Activated naive CD4-positive, alpha-beta T cell treated with anti-CD3 and anti-CD28 coated beads for 36 hours (primary cell): ENCODE measurements at regions of chr7 and their contacts with region 1.

Region 1: DNA sequence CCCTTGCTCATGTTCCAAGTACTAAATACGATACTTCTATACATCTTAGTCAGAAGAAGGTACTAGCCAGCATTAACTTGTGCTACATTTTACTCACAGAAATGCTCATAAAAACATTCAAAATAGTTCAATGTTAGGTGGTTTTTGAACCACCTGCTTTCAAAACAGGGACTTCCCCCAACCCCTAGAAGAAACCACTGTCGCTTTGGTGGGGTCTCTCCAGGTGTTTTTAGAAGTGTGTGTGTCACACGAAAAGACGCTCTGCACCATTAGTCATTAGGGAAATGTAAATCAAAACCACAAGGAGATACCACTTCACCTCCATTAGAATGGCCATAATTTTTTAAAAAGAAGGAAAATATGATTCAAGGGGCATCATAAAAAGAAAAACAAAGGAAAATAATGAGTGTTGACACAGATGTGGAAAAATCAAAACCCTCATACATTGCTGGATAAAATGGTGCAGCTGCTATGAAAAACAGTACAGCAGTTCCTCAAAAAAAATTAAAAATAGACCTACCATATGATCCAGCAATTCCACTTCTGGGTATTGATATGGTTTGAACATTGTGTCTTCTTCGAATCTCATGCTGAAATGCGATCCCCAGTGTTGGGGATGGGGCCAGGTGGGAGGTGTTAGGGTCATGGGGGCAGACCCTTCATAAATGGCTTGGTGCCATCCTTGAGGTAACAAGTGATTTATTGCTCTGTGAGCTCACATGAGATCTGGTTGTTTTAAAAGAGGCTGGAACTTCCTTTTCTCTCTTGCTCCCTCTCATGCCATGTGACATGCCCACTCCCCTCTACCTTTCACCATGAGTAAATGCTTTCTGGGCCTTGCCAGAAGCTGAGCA is 74.2 kb downstream of the MALSU1 start:
- DNase-seq: peak; percentile 88
- H3K4me3 Mint-ChIP-seq: no peak overlapping the region
- H3K27ac Mint-ChIP-seq: peak overlapping the region; percentile 83
- H3K4me1 Mint-ChIP-seq: peaks cover 48% of the 10 kb centered on the region
- H3K27me3 Mint-ChIP-seq: peaks cover 6% of the 10 kb centered on the region

Region 2: GRCh38 chr7:22445140-22445743 is 928.1 kb before region 1 on chr7:
- CTCF ChIA-PET with region 1: no interaction called
- intact Hi-C with region 1: loop called (anchors 5 kb)
- DNase-seq: peak; percentile 24
- H3K4me3 Mint-ChIP-seq: no peak overlapping the region
- H3K27ac Mint-ChIP-seq: no peak overlapping the region
- H3K4me1 Mint-ChIP-seq: peaks cover 18% of the 10 kb centered on the region
- H3K27me3 Mint-ChIP-seq: peaks cover 3% of the 10 kb centered on the region

Region 3: DNA sequence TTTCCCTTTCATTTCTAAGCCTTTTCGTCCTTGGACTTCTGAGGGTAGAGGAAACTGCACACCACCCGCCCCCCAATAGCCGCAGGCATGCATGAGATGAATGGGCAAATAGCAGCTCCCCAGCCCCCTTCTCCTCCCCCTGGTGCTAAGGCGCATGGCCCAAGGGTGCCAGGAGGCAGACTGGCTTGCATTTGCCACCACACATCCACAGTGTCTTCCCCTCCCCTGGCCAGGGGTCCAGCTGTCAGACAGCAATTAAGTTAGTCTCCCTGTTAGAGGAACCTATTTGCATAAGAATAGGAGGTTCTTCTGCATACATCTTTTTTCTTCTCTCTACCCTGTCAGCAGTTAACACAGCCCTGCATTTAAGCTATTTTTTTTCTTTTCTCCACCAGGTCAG is 571.0 kb before region 1 on chr7:
- CTCF ChIA-PET with region 1: no interaction called
- intact Hi-C with region 1: no loop called
- DNase-seq: no peak
- H3K4me3 Mint-ChIP-seq: no peak overlapping the region
- H3K27ac Mint-ChIP-seq: no peak overlapping the region
- H3K4me1 Mint-ChIP-seq: no peaks in the 10 kb centered on the region
- H3K27me3 Mint-ChIP-seq: peaks cover 4% of the 10 kb centered on the region

Region 4: DNA sequence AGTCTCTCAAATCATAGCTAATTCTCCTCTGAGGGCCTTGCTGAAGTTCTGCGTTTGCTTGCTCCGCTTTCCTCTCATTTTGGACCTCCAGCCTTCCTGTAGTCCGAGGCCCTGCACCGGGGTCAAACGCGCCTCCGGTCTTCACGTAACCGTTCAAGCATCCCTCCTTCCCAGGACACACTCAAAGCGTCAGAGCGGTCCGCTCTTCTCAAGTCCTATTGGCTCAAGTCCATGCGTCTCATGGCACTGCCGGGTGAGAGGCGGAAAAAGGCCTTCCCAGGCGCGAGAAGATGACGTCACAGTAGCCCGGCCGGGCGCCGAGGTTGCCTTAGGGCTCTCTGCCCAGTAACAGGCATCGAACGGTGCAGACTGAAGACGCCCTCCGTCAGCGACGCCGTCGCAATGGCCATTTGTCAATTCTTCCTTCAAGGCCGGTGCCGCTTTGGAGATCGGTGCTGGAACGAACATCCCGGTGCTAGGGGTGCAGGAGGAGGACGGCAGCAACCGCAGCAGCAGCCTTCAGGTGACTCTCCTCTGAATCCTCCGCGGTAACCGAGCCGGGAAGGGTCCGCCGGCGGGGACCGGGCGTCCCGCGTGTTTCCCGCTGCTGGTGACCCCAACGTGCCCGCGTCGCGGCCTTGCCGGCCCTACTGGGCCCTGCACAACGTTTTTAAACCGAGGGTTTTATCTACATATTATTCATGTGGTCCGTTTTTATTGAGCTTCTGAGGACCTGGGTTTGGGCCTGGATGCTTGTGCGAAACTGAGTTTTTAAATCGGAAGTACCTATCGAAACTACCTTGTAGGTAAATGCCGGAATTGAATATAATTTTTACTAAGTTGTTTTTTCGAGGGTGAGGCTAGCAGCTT is 191.5 kb before region 1 on chr7 and contains the start of gene NUP42:
- CTCF ChIA-PET with region 1: no interaction called
- intact Hi-C with region 1: loop called (anchors 10 kb)
- DNase-seq: peak; percentile 98
- H3K4me3 Mint-ChIP-seq: peak within 1 kb of the TSS; percentile 99
- H3K27ac Mint-ChIP-seq: peak within 1 kb of the TSS; percentile 99
- H3K4me1 Mint-ChIP-seq: peaks cover 35% of the 10 kb centered on the region
- H3K27me3 Mint-ChIP-seq: no peaks in the 10 kb centered on the region
- total RNA-seq, gene NUP42: 15.2 to 17.0 TPM

Region 5: GRCh38 chr7:23347682-23348180 is 25.6 kb before region 1 on chr7:
- CTCF ChIA-PET with region 1: no interaction called
- intact Hi-C with region 1: loop called (anchors 1 kb)
- DNase-seq: peak; percentile 20
- H3K4me3 Mint-ChIP-seq: peak overlapping the region; percentile 8
- H3K27ac Mint-ChIP-seq: peak overlapping the region; percentile 64
- H3K4me1 Mint-ChIP-seq: peaks cover 32% of the 10 kb centered on the region
- H3K27me3 Mint-ChIP-seq: no peaks in the 10 kb centered on the region

Region 6: GRCh38 chr7:23404546-23405239 is 31.3 kb after region 1 on chr7:
- CTCF ChIA-PET with region 1: no interaction called
- intact Hi-C with region 1: loop called (anchors 1 kb)
- DNase-seq: peak; percentile 25
- H3K4me3 Mint-ChIP-seq: no peak overlapping the region
- H3K27ac Mint-ChIP-seq: peak overlapping the region; percentile 81
- H3K4me1 Mint-ChIP-seq: peaks cover 28% of the 10 kb centered on the region
- H3K27me3 Mint-ChIP-seq: no peaks in the 10 kb centered on the region

Region 7: DNA sequence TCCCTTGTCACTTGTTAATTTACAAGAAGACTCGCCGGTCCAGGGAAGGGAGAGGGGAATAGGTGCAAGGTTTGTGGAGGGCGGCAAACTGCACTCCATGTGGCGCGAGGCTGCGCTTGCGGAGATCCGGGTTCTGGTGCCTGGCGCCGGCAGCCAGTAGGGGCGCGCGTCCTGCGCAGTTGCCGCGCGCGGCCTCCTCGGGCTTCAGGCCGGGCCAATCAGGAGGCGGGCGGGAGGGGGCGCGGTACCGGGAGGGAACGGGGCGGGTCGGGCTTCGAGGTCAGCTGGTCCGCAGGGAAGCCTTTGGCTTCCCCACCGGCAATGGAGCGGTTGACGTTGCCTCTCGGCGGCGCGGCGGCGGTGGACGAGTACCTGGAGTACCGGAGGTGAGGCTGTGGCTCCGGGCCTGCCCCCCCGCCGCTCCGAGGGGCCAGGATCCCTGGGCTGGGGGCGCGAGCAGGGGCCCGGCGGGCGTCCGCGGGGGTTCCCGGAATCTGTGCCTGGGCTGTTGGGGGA is 306.6 kb after region 1 on chr7 and contains the start of gene FAM221A:
- CTCF ChIA-PET with region 1: no interaction called
- intact Hi-C with region 1: loop called (anchors 1 kb)
- DNase-seq: peak; percentile 86
- H3K4me3 Mint-ChIP-seq: peak within 1 kb of the TSS; percentile 80
- H3K27ac Mint-ChIP-seq: peak within 1 kb of the TSS; percentile 66
- H3K4me1 Mint-ChIP-seq: peaks cover 11% of the 10 kb centered on the region
- H3K27me3 Mint-ChIP-seq: peaks cover 5% of the 10 kb centered on the region
- total RNA-seq, gene FAM221A: 8.7 to 10.0 TPM

Region 8: GRCh38 chr7:25125137-25125946 is 1752.0 kb after region 1 on chr7 and contains the start of gene CYCS:
- CTCF ChIA-PET with region 1: no interaction called
- intact Hi-C with region 1: loop called (anchors 10 kb)
- DNase-seq: peak; percentile 100
- H3K4me3 Mint-ChIP-seq: peak within 1 kb of the TSS; percentile 93
- H3K27ac Mint-ChIP-seq: peak within 1 kb of the TSS; percentile 98
- H3K4me1 Mint-ChIP-seq: peaks cover 31% of the 10 kb centered on the region
- H3K27me3 Mint-ChIP-seq: no peaks in the 10 kb centered on the region
- total RNA-seq, gene CYCS: 213 to 224 TPM